ENCODE measurements at regions of chr3 and their contacts with region 1.

Region 1: DNA sequence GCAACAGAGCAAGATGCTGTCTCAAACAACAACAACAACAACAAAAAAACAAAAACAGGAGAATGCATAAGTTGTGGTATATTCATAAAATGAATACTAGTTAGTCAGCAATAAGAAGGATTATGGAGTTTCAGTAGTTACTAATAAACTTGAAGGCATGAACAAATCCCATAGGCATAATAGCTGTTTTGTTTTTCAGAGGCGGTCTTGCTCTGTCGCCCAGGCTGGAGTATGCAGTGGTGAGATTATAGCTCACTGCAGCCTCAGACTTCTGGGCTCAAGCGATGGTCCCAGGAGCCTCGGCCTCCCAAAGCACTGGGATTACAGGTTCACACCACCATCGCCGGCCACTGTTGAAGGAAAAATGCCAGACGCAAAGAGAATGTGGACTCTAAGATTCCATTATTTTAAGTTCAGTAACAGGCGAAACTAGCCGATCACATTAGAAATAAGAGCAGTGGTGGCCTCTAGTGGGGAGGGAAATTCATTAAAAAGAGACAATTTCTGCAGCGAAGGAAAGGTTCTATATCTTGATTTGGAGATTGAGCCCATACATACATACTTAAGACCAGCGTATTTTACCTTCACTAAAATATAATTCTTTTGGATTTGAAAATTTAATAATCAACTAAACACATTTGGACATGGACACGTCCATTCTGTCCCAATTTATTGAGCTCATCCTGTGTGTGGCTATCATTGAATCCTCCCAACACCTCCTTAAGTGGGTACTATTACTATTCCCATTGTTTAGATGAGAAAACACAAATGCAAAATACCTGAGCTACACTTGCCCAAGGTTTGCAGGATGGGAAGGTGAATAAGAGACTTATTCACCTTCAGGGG is 27.4 kb upstream of the HDAC11 start:
- DNase-seq: peak; percentile 60
- H3K4me3 Mint-ChIP-seq: peak overlapping the region; percentile 86
- H3K27ac Mint-ChIP-seq: peak overlapping the region; percentile 91
- H3K4me1 Mint-ChIP-seq: peaks cover 33% of the 10 kb centered on the region
- H3K27me3 Mint-ChIP-seq: peaks cover 7% of the 10 kb centered on the region

Region 2: DNA sequence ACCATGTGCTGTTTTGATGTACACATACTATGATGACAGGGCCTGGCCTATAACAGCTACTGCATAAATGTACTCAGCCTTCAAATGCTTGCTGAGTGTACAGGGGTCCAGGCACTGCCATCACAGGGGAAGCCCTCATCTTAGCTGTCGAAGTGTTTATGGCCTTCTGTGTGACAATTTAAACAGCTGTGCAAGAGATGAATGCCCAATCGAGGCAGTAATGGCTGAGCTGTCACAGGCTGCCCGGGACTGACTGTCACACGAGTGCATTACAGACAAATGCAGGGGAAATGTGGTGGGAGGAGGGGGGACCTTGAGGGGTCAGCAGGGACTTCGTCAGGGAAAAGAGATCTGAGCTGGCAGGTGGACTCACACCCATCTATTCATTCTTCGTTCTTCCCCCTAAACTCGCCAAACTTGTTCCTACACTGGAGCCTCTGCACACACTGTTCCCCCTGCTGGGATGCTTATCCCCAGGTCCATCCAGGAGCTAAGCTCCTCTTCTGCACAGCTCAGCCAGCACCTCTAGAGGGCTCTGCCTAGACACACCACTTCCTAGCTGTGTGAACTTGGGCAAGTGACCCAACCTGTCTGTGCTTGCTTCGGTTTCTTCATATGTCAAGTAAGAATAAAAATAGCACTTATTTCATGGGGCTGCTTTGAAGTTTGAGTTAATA is 223.3 kb before region 1 on chr3:
- CTCF ChIA-PET with region 1: interaction called, 11 read pairs
- DNase-seq: peak; percentile 37
- H3K4me3 Mint-ChIP-seq: no peak overlapping the region
- H3K27ac Mint-ChIP-seq: no peak overlapping the region
- H3K4me1 Mint-ChIP-seq: peaks cover 15% of the 10 kb centered on the region
- H3K27me3 Mint-ChIP-seq: peaks cover 50% of the 10 kb centered on the region

Region 3: DNA sequence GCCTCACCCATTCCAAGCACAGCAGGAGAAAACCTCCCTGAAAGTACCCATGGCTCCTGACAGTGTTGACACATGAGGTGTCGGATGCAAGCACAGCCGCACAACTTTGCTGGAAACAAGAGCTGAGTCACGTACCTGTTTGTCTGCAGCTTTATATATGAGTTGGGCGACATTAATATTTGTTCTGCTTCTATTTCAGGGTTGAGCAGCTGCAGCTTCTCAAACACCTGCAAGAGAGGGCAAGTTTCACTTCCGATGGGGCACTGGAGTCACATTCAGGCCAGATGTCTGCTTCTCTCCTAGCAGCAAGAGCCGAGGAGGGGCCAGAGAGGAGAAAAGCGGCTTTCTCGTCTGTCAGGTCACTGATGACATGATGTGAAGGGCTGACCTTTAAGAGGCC is 120.6 kb before region 1 on chr3:
- CTCF ChIA-PET with region 1: interaction called, 12 read pairs
- DNase-seq: no peak
- H3K4me3 Mint-ChIP-seq: no peak overlapping the region
- H3K27ac Mint-ChIP-seq: peak overlapping the region; percentile 85
- H3K4me1 Mint-ChIP-seq: peaks cover 3% of the 10 kb centered on the region
- H3K27me3 Mint-ChIP-seq: no peaks in the 10 kb centered on the region

Region 4: DNA sequence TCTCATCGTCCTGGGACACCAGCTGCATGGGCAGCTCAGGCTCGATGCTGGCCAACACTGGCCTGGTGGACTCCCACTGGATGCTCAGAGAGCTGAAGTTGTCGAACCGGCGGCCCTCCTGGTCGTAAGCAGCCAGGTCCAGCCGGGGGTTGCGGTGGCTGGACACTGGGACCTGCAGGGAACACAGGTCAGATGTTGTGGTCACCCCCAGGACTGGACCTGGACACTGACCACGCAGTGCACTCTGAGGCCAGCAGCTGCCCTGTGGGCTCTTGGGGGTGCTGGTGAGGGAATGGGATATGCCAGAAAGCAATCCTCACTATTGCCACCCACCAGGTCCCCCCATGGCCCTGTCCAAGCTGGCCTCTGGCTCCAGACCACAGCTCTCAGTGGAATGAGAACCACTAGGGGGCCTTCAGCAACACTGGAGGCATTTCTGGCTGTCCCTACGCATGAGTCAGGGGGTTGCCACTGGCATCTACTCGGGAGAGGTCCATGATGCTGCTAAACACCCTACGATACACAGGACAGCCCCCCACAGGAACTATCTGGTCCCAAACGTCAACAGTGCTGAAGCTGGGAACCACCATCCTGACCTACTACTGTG is 98.7 kb before region 1 on chr3:
- CTCF ChIA-PET with region 1: interaction called, 105 read pairs
- DNase-seq: no peak
- H3K4me3 Mint-ChIP-seq: no peak overlapping the region
- H3K27ac Mint-ChIP-seq: no peak overlapping the region
- H3K4me1 Mint-ChIP-seq: peaks cover 42% of the 10 kb centered on the region
- H3K27me3 Mint-ChIP-seq: no peaks in the 10 kb centered on the region

Region 5: DNA sequence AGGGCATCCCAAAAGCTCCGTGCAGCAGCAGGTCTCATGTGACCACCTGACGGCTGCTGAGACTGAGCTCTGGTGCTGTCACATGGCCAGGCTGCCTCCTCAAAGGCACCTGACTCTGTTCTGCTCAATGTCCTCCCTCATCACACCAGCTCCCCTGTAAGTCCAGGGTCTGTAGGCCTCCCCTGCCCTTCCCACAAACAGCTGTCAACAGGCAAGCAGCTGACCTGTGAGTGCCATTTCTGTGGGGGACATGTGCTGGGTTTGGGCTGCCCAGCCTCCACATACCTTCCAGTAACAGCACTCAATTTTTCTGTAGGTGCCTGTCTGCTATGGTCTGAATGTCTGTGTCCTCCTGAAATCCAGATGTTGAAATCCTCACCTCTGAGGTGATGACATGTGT is 43.8 kb before region 1 on chr3:
- CTCF ChIA-PET with region 1: interaction called, 48 read pairs
- DNase-seq: no peak
- H3K4me3 Mint-ChIP-seq: no peak overlapping the region
- H3K27ac Mint-ChIP-seq: peak overlapping the region; percentile 24
- H3K4me1 Mint-ChIP-seq: peaks cover 28% of the 10 kb centered on the region
- H3K27me3 Mint-ChIP-seq: no peaks in the 10 kb centered on the region